WTC11 (cell line): ENCODE measurements at regions of chr1 and their contacts with region 1.

Region 1: DNA sequence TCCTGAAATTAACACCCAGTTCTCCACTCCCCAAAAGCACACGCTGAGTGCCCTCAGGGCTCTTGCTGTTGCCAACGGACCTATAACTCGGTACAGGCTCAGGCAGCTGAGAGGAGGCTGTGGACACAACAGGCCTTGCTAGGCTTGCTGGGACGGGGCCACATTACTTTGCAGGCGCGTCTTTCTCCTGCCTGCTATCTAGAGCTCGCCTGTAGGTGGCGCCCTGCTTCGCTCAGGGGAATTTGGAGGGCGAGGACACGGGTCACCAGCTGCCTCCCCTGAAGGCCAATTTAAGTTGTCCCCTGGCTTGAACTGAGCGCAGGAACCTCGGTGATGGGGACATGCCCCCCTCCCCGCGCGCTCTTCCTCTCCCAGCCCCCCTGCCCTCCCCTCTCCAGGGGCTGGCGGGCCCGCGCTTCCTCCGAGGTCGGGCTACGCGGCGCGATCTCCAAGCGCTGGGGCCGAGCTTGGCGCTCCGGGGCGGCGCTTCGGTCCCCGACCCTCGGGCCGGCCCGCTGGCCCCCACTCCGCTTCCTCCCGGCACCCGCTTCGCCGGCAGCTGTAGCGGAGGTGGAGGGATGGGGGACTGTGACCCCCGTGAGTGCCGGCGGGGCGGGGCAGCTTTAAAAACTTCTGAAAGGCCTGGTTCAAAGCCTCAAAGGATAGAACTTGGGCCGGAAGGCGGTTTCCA is 32.4 kb upstream of the NFIA start:
- DNase-seq: peak; percentile 97
- ATAC-seq: peak; percentile 69
- H3K4me3 Mint-ChIP-seq: peak overlapping the region; percentile 70
- H3K27ac Mint-ChIP-seq: no peak overlapping the region
- H3K4me1 Mint-ChIP-seq: peaks cover 36% of the 10 kb centered on the region
- H3K27me3 Mint-ChIP-seq: peaks cover 50% of the 10 kb centered on the region
- CTCF ChIP-seq: peak; percentile 94

Region 2: GRCh38 chr1:60978421-60979357 is 71.3 kb before region 1 on chr1:
- CTCF ChIA-PET with region 1: interaction called, 15 read pairs
- POLR2A ChIA-PET with region 1: no interaction called
- DNase-seq: peak; percentile 20
- ATAC-seq: peak; percentile 72; the same call in 1 of the 2 replicates
- H3K4me3 Mint-ChIP-seq: no peak overlapping the region
- H3K27ac Mint-ChIP-seq: no peak overlapping the region
- H3K4me1 Mint-ChIP-seq: peaks cover 25% of the 10 kb centered on the region
- H3K27me3 Mint-ChIP-seq: no peaks in the 10 kb centered on the region; the same call in 1 of the 2 replicates
- CTCF ChIP-seq: no peak

Region 3: GRCh38 chr1:61035880-61036279 is 14.1 kb before region 1 on chr1:
- CTCF ChIA-PET with region 1: no interaction called
- POLR2A ChIA-PET with region 1: no interaction called
- DNase-seq: no peak
- ATAC-seq: no peak
- H3K4me3 Mint-ChIP-seq: no peak overlapping the region
- H3K27ac Mint-ChIP-seq: no peak overlapping the region
- H3K4me1 Mint-ChIP-seq: no peaks in the 10 kb centered on the region
- H3K27me3 Mint-ChIP-seq: no peaks in the 10 kb centered on the region
- CTCF ChIP-seq: no peak

Region 4: GRCh38 chr1:61077676-61078541 is 27.9 kb after region 1 on chr1:
- CTCF ChIA-PET with region 1: interaction called, 66 read pairs
- POLR2A ChIA-PET with region 1: interaction called, 9 read pairs
- DNase-seq: peak; percentile 88
- ATAC-seq: peak; percentile 56
- H3K4me3 Mint-ChIP-seq: peak overlapping the region; percentile 87
- H3K27ac Mint-ChIP-seq: peak overlapping the region; percentile 94
- H3K4me1 Mint-ChIP-seq: peaks cover 44% of the 10 kb centered on the region
- H3K27me3 Mint-ChIP-seq: peaks cover 57% of the 10 kb centered on the region
- CTCF ChIP-seq: no peak

Region 5: DNA sequence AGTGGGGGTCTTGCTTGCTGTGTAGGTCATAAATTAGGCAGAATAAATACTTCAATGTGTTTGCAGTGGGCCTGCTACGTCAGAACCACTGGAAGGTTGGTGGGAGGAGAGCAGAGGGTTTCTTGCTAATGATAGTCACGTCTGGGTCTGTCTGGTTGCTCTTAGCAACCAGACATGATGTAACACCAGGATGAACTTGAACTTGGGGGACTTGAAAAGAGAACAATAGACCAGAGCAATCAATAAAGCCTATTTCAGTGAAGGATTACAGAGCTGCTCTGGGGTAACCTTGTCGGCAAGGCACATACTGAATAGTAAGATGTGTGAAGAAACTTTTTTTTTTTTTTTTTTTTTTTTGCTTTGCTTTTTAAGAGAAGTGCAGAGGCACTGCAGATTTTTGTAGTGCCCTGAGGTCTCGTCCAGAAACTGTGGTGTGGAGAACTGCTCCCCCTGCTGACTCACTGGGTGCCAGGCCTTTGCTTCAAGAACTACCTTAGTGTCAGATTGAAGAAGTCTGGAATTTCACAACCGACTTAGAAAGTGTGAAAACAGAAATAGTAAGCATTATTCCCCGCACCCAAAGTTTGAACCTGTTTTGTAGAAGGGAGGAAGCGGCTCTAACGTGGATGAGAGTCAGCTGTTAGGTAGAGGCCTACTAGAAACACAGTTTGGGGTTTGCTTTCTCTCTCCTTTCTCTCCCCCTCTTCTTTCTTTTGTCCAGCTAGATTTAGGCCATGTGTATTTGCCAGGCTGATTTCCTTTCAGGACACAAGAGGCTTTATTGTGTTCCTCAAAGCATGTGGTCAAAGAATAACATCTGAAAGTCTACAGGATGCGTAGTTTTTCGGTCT is 403.3 kb after region 1 on chr1:
- CTCF ChIA-PET with region 1: interaction called, 12 read pairs
- POLR2A ChIA-PET with region 1: no interaction called
- DNase-seq: peak; percentile 80
- ATAC-seq: peak; percentile 91
- H3K4me3 Mint-ChIP-seq: peak overlapping the region; percentile 25
- H3K27ac Mint-ChIP-seq: peak overlapping the region; percentile 84
- H3K4me1 Mint-ChIP-seq: peaks cover 55% of the 10 kb centered on the region
- H3K27me3 Mint-ChIP-seq: no peaks in the 10 kb centered on the region
- CTCF ChIP-seq: peak; percentile 14; the same call in 1 of the 2 replicates

Region 6: DNA sequence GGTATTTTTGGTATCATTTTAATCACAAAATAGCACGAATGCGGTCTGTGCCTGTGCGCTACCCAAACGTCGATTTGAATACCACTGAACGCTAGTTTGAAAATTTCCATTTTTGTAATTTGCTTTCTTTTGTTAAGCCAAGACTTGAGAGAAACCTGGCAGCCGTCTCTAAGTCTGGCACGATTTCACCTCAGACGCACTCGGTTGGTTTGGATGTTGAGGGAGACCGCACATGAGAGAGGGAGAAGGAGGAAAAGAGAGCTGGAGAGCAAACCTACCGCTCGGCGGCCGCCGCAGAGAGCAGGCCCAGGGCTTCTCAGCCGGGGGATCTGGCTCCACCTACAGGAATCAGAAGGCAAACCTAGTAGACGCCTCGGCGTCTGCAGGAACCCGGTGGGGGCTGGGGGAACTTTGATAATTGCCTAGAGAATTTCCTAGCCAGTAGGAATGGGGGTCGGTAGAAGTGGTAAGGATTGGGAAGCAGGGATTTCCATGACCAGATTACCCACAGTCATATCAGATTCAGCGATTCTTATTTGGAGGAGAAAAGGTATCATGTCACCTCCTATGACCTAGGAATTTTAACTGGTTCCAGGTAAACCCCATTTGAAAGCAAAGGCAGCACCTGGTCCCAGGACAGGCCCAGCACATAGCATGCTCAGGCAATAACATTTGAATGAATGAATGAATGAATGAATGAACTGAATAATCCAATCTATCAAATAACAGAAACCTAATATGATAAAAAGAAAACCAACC is 591.8 kb after region 1 on chr1:
- CTCF ChIA-PET with region 1: interaction called, 13 read pairs
- POLR2A ChIA-PET with region 1: no interaction called
- DNase-seq: peak; percentile 87
- ATAC-seq: peak; percentile 97
- H3K4me3 Mint-ChIP-seq: peak overlapping the region; percentile 33
- H3K27ac Mint-ChIP-seq: peak overlapping the region; percentile 80; the same call in 1 of the 2 replicates
- H3K4me1 Mint-ChIP-seq: peaks cover 37% of the 10 kb centered on the region
- H3K27me3 Mint-ChIP-seq: peaks cover 12% of the 10 kb centered on the region
- CTCF ChIP-seq: peak; percentile 72